Tibial artery (tissue), 4 donors: ENCODE measurements at regions of chr12 and their contacts with region 1.

Region 1: GRCh38 chr12:6662906-6663742 is at the start of gene ING4:
- DNase-seq: peak; percentile 99
- H3K4me3 ChIP-seq: peak within 1 kb of the TSS; percentile 67 to 93
- H3K27ac ChIP-seq: peak within 1 kb of the TSS; percentile 81 to 83
- H3K4me1 ChIP-seq: peaks cover 0 to 20% (median 13%) of the 10 kb centered on the region in 4 donors
- H3K27me3 ChIP-seq: no peaks in the 10 kb centered on the region
- CTCF ChIP-seq: no peak

Region 2: GRCh38 chr12:6603095-6603567 is 60.0 kb before region 1 on chr12:
- intact Hi-C with region 1: no loop called
- DNase-seq: peak; percentile 62 to 86
- H3K4me3 ChIP-seq: peak overlapping the region; percentile 22 to 84
- H3K27ac ChIP-seq: peak overlapping the region; percentile 98 to 100
- H3K4me1 ChIP-seq: peaks cover 4 to 46% (median 41%) of the 10 kb centered on the region in 4 donors
- H3K27me3 ChIP-seq: no peaks in the 10 kb centered on the region
- CTCF ChIP-seq: no peak

Region 3: DNA sequence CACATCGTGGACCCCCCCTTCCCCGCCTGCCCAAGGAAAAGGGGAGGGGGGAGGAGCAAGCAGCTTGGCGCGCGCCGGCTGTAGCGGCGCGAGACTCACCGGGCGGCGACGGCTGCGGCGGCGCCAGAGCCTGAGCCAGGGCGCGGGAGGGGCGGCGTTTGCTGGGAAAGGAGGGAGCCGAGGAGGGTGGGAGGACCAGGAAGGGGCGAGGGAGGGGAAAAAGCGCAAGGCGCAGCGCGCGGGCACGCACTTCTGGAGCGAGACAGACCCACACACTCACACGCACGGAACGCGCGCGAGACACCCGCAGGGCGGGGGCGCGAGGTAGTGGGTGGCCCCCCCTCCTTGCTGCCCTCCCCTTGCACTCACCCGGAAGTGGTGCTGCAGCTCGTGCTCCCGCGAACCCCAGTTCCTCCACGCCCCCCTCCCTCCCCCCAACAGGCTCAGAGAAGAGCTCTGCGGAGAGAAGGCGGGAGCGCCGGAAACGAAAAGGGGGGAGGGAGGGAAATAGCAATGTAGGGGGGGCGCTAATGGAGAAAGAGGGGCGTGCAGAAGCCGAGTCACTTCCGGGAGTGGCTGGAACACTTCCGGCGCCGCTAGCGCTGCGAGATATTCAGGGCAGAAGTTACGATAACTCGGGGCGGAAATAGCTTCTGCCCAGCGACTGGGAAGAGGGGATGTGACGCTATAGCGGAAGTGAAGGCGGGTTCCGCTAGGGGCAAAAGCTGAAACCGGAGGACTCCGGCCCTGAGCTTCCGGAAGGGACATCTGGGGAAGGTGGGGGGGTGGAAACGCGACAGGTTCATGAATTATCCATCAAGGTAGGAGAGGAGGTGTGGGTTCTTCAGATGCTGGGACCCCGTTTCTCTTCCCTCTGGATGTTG is 26.1 kb after region 1 on chr12 and contains the start of gene ZNF384:
- intact Hi-C with region 1: loop called (anchors 1 kb)
- DNase-seq: peak; percentile 98 to 99
- H3K4me3 ChIP-seq: peak within 1 kb of the TSS; percentile 92 to 99
- H3K27ac ChIP-seq: peak within 1 kb of the TSS; percentile 96 to 100
- H3K4me1 ChIP-seq: peaks cover 0 to 41% (median 22%) of the 10 kb centered on the region in 4 donors
- H3K27me3 ChIP-seq: peaks cover 0 to 4% of the 10 kb centered on the region in 2 donors
- CTCF ChIP-seq: peak in 1 of 2 experiments; percentile 46

Region 4: GRCh38 chr12:6745741-6746525 is 82.8 kb after region 1 on chr12:
- intact Hi-C with region 1: no loop called
- DNase-seq: no peak
- H3K4me3 ChIP-seq: no peak overlapping the region
- H3K27ac ChIP-seq: no peak overlapping the region
- H3K4me1 ChIP-seq: no peaks in the 10 kb centered on the region
- H3K27me3 ChIP-seq: no peaks in the 10 kb centered on the region
- CTCF ChIP-seq: no peak